Activated CD4-positive, alpha-beta T cell treated with anti-CD3 and anti-CD28 coated beads for 36 hours (primary cell): ENCODE measurements at regions of chr17 and their contacts with region 1.

Region 1: GRCh38 chr17:28494445-28495188 is 11.5 kb upstream of the FOXN1 start:
- DNase-seq: peak; percentile 90
- ATAC-seq: peak; percentile 92
- H3K4me3 Mint-ChIP-seq: no peak overlapping the region
- H3K27ac Mint-ChIP-seq: no peak overlapping the region
- H3K4me1 Mint-ChIP-seq: no peaks in the 10 kb centered on the region
- H3K27me3 Mint-ChIP-seq: peaks cover 5% of the 10 kb centered on the region

Region 2: DNA sequence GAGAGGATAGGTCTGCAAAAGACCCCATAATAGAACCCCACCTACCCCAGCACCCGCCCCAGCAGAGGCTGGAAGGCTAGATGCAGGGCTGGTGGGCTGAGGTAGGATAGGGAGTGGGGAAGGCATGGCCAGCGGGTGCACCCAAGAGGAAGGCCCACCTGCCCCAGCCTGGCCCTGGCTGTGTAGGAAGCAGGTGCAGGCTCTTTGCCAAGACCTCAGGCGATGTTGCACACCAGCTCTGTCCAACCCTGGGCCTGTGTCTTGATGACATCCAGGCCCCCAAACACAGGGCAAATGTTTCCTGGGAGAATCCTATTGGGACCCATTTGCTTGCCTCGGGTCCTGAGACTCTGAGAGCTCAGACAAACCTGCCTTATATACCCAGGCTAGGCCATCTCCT is 45.6 kb after region 1 on chr17:
- CTCF ChIA-PET with region 1: interaction called, 6 read pairs
- POLR2A ChIA-PET with region 1: no interaction called
- intact Hi-C with region 1: loop called (anchors 1 kb)
- DNase-seq: no peak
- ATAC-seq: no peak
- H3K4me3 Mint-ChIP-seq: no peak overlapping the region
- H3K27ac Mint-ChIP-seq: no peak overlapping the region
- H3K4me1 Mint-ChIP-seq: no peaks in the 10 kb centered on the region
- H3K27me3 Mint-ChIP-seq: no peaks in the 10 kb centered on the region

Region 3: GRCh38 chr17:28612936-28613872 is 118.6 kb after region 1 on chr17:
- CTCF ChIA-PET with region 1: interaction called, 4 read pairs
- POLR2A ChIA-PET with region 1: no interaction called
- intact Hi-C with region 1: loop called (anchors 1 kb)
- DNase-seq: peak; percentile 51
- ATAC-seq: peak; percentile 69
- H3K4me3 Mint-ChIP-seq: no peak overlapping the region
- H3K27ac Mint-ChIP-seq: no peak overlapping the region
- H3K4me1 Mint-ChIP-seq: peaks cover 3% of the 10 kb centered on the region
- H3K27me3 Mint-ChIP-seq: no peaks in the 10 kb centered on the region

Region 4: DNA sequence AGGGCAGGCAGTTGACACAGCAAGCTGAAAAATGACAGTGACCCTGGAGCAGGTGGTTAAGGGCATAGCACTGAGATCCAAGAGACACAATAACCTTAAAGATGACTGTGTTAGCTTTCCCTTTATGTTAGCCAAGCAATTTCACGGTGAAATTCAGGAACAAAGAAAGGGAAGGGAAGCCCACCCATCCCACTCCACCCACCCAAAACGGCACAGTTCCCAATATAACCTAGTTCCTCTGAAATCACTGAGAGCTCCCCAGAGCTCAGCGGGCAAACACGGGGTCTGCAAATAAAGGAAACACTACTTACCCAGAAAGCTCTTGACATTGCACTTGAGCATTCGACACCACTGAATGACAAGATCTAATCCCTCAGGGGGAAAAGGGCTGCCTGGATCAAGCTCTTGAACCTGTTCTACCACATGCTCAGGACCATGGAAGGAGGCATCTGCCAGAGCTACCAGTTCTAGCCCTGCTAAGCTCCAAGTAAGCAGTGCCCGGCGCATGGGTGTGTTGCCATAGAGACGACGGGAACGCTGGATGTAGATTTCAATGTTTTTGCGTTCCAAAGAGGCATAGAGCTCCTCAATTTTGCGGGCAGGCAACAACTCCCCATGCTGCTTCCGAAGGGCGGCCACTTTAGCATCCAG is 139.7 kb after region 1 on chr17:
- CTCF ChIA-PET with region 1: no interaction called
- POLR2A ChIA-PET with region 1: no interaction called
- intact Hi-C with region 1: no loop called
- DNase-seq: no peak
- ATAC-seq: no peak
- H3K4me3 Mint-ChIP-seq: no peak overlapping the region
- H3K27ac Mint-ChIP-seq: no peak overlapping the region
- H3K4me1 Mint-ChIP-seq: peaks cover 13% of the 10 kb centered on the region
- H3K27me3 Mint-ChIP-seq: no peaks in the 10 kb centered on the region